ENCODE measurements at regions of chr13 and their contacts with region 1.

Region 1: GRCh38 chr13:48892053-48892690 is 83.5 kb upstream of the FNDC3A start:
- DNase-seq: no peak
- H3K4me3 Mint-ChIP-seq: peak overlapping the region; percentile 51
- H3K27ac Mint-ChIP-seq: peak overlapping the region; percentile 83
- H3K4me1 Mint-ChIP-seq: peaks cover 27% of the 10 kb centered on the region
- H3K27me3 Mint-ChIP-seq: no peaks in the 10 kb centered on the region

Region 2: GRCh38 chr13:48505597-48506091 is 386.5 kb before region 1 on chr13:
- intact Hi-C with region 1: loop called (anchors 1 kb)
- DNase-seq: peak; percentile 57
- H3K4me3 Mint-ChIP-seq: peak overlapping the region; percentile 38
- H3K27ac Mint-ChIP-seq: peak overlapping the region; percentile 62
- H3K4me1 Mint-ChIP-seq: peaks cover 68% of the 10 kb centered on the region
- H3K27me3 Mint-ChIP-seq: peaks cover 4% of the 10 kb centered on the region

Region 3: GRCh38 chr13:48562296-48563066 is 329.7 kb before region 1 on chr13:
- intact Hi-C with region 1: loop called (anchors 10 kb)
- DNase-seq: peak; percentile 77
- H3K4me3 Mint-ChIP-seq: no peak overlapping the region
- H3K27ac Mint-ChIP-seq: no peak overlapping the region
- H3K4me1 Mint-ChIP-seq: peaks cover 59% of the 10 kb centered on the region
- H3K27me3 Mint-ChIP-seq: peaks cover 68% of the 10 kb centered on the region

Region 4: DNA sequence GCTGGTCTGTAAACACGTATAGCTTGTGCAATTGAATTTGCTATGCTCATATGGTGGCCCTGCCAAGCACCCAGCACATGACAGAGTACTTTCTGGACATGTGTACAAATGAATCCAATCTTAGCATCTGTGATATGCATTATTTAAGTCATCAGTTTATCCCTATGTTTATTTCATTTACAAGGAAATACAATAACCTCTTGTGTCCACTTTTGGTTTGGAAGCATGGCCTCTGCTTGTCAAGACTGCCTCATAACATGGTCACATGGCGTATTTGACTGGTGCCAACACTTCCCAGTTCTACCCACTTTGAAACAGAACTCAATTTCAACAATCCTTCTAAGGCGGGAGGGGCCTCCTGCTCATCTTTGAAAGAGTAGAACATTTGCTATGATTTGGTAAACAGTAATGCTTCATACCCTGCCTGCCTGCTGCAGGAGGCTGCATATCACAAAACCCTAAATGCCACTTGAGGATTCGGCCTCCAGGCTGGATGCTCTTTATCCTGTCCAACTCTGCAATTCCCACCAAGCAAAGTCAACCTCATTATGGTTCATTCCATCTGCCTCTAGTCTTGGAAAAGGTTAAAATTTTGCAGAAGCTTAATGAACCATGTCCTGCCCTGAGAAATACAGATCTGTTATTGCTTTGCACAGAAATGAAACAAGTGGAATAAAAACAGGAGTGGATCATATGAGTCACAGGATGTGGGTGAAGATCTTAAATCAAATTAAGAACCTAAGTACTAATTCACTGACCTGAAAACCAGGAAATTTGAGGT is 87.2 kb before region 1 on chr13:
- intact Hi-C with region 1: loop called (anchors 1 kb)
- DNase-seq: no peak
- H3K4me3 Mint-ChIP-seq: peak overlapping the region; percentile 32
- H3K27ac Mint-ChIP-seq: peak overlapping the region; percentile 46
- H3K4me1 Mint-ChIP-seq: peaks cover 31% of the 10 kb centered on the region
- H3K27me3 Mint-ChIP-seq: peaks cover 10% of the 10 kb centered on the region

Region 5: DNA sequence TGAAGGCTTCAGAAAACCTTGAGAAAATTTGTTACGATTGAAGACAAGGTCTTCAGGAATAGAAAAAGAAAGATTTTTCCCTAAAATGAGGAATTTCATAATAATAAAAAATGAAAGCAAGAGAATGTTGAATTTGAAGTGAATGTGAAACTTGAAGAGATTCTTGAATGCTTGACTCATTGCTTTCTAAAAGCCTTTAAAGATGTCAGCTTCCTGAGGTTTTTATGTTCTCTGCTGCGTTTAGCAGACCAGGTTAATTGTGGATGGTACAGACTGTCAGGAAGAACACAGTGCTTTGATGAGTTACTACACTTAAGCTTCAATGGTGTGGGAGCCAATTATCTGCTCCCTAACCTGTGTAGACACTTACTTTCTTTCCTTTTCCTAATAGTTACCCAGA is 12.7 kb before region 1 on chr13:
- intact Hi-C with region 1: loop called (anchors 1 kb)
- DNase-seq: no peak
- H3K4me3 Mint-ChIP-seq: peak overlapping the region; percentile 1
- H3K27ac Mint-ChIP-seq: peak overlapping the region; percentile 1
- H3K4me1 Mint-ChIP-seq: peaks cover 52% of the 10 kb centered on the region
- H3K27me3 Mint-ChIP-seq: peaks cover 6% of the 10 kb centered on the region

Region 6: DNA sequence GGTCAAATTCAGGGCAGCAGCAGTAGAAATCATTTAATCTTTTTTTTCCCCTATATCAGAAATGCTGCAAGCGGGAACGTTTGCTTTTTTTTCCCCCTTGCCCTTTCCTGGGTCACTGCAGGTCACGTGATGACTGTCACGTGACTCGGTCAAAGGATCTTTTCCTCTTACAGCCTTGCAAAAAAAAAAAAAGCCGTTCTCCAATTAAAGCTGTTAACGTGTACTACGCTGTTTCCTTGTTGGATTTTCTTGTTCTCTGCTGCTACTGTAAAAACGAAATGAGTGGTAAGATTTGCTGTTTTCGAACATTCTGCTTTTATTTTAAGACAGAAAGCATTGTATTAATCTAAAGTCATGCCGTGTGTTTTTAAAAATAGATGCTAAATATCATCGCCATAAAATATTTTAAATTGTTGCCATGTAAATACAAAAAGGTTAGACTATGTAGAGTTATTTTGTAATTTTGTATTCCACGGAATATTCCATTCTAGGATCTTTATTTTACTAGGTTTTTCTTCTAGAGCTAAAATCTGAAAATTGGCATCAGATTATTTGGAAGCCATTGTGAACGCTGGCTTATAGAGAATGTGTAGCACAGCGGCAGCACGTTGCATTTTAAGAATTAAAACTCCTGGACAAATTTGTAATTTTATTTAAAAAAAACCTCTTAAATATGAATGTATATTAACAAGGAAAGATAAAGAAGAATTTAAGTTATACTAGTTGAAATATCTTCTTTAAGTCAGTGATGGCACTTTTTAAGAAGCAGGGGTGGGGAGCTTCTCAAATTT is 218.1 kb after region 1 on chr13:
- intact Hi-C with region 1: loop called (anchors 5 kb)
- DNase-seq: peak; percentile 71
- H3K4me3 Mint-ChIP-seq: peak overlapping the region; percentile 87
- H3K27ac Mint-ChIP-seq: peak overlapping the region; percentile 70
- H3K4me1 Mint-ChIP-seq: peaks cover 31% of the 10 kb centered on the region
- H3K27me3 Mint-ChIP-seq: no peaks in the 10 kb centered on the region

Measured in activated T-helper 1 cell treated with anti-CD3 and anti-CD28 coated beads, Interleukin-12 subunit alpha, Interleukin-12 subunit beta, Interleukin-2, Interleukin-4 antibody, amounts not matched to agents 30 ng/mL and 10 ng/mL and 1 ng/mL, durations not matched to agents 14 hours and 24 hours and 36 hours (primary cell).